ENCODE measurements at regions of chr5 and their contacts with region 1.

Region 1: GRCh38 chr5:160399402-160400353 is at the start of gene FAM200C:
- DNase-seq: peak; percentile 84
- H3K4me3 Mint-ChIP-seq: peak within 1 kb of the TSS; percentile 79
- H3K27ac Mint-ChIP-seq: peak within 1 kb of the TSS; percentile 21
- H3K4me1 Mint-ChIP-seq: peaks cover 12% of the 10 kb centered on the region
- H3K27me3 Mint-ChIP-seq: no peaks in the 10 kb centered on the region
- total RNA-seq, gene FAM200C: 0.84 to 0.93 TPM

Region 2: GRCh38 chr5:159163027-159163700 is 1236.5 kb before region 1 on chr5:
- CTCF ChIA-PET with region 1: no interaction called
- intact Hi-C with region 1: loop called (anchors 10 kb)
- DNase-seq: peak; percentile 41
- H3K4me3 Mint-ChIP-seq: no peak overlapping the region
- H3K27ac Mint-ChIP-seq: peak overlapping the region; percentile 32
- H3K4me1 Mint-ChIP-seq: peaks cover 47% of the 10 kb centered on the region
- H3K27me3 Mint-ChIP-seq: no peaks in the 10 kb centered on the region

Region 3: GRCh38 chr5:161165998-161166660 is 766.5 kb after region 1 on chr5:
- CTCF ChIA-PET with region 1: no interaction called
- intact Hi-C with region 1: no loop called
- DNase-seq: no peak
- H3K4me3 Mint-ChIP-seq: no peak overlapping the region
- H3K27ac Mint-ChIP-seq: no peak overlapping the region
- H3K4me1 Mint-ChIP-seq: no peaks in the 10 kb centered on the region
- H3K27me3 Mint-ChIP-seq: no peaks in the 10 kb centered on the region